ENCODE measurements at regions of chr1 and their contacts with region 1.

Region 1: DNA sequence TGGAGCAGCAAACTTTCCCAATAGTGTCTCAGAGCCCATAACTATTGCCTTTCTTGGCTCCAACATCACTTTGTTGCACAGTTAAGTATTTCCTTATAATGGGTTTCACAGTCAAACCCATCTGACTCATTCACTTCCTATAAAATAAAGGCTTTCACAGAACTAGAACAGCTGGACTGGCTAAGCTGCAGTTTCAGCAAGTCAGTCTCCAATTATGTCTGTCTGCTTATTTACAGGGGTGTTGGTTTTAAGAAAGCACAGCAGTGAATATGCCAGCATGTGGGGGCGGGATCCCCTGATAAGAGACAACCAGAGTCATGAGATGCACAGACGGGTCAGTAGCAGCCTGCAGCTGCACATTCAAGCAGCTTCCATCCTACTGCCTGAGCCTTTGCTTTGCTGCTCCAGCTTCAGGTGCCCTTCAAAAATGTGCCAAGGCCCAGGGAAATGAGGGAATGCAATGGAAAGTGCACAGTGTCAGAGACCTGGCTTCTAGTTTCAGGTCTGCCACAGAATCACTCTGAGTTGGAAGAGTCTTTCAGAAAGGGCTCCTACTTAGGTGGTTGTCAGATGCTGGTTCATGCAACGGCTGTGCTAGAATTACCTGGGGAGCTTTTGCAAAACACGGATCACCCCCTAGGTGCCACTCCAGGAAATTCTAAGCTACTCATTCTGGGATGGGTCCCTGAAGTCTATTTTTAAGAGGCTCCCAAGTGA is 24.8 kb downstream of the RNF19B start:
- DNase-seq: peak; percentile 79
- ATAC-seq: peak; percentile 86
- H3K4me3 ChIP-seq: no peak overlapping the region
- H3K27ac ChIP-seq: peak overlapping the region; percentile 68
- H3K4me1 ChIP-seq: peaks cover 40% of the 10 kb centered on the region
- H3K27me3 ChIP-seq: no peaks in the 10 kb centered on the region
- CTCF ChIP-seq: no peak

Region 2: GRCh38 chr1:32580348-32581017 is 359.3 kb before region 1 on chr1:
- CTCF ChIA-PET with region 1: no interaction called
- POLR2A ChIA-PET with region 1: no interaction called
- intact Hi-C with region 1: no loop called
- DNase-seq: no peak
- ATAC-seq: no peak
- H3K4me3 ChIP-seq: no peak overlapping the region
- H3K27ac ChIP-seq: no peak overlapping the region
- H3K4me1 ChIP-seq: no peaks in the 10 kb centered on the region
- H3K27me3 ChIP-seq: no peaks in the 10 kb centered on the region
- CTCF ChIP-seq: no peak

Region 3: GRCh38 chr1:32953495-32953894 is 13.7 kb after region 1 on chr1:
- CTCF ChIA-PET with region 1: interaction called, 6 read pairs
- POLR2A ChIA-PET with region 1: no interaction called
- intact Hi-C with region 1: loop called (anchors 2 kb)
- DNase-seq: peak; percentile 91
- ATAC-seq: peak; percentile 86
- H3K4me3 ChIP-seq: peak overlapping the region; percentile 3; the same call in 1 of the 2 replicates
- H3K27ac ChIP-seq: peak overlapping the region; percentile 93
- H3K4me1 ChIP-seq: peaks cover 38% of the 10 kb centered on the region
- H3K27me3 ChIP-seq: no peaks in the 10 kb centered on the region
- CTCF ChIP-seq: no peak

Measured in PC-3 (cell line).